ENCODE measurements at regions of chr1 and their contacts with region 1.

Region 1: DNA sequence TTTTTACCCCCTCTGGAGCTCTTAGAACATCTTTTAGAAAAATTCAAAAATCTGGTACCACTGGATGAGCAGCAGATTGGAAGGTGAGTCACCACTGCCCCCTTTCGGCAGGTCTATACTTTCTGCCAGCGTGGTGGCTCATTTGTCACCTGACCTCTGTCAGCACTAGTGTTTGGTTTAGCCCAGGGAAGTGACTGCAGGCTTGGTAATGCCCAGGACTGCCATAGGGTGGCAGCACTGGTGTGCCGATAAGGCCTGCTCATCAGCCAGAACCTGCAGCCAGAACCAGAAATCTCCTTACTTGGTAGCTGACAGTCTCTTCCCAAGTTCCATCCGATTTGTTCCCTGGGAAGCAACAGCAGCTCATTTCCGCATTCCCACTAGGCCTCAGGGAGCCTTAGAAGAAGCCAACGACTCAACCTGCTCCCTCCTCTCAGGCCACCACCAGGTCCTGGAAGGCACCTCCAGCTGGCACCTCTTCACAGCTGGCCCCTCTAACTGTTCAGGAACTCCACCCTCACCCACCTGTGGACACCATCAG is 6.8 kb downstream of the SMIM12 start:
- DNase-seq: peak; percentile 80 to 92 (median 88)
- ATAC-seq: peak; percentile 100
- H3K4me3 Mint-ChIP-seq: no peak overlapping the region
- H3K27ac Mint-ChIP-seq: peak overlapping the region in 9 of 10 donors; percentile 26 to 92 (median 68)
- H3K4me1 Mint-ChIP-seq: peaks cover 16 to 45% (median 35%) of the 10 kb centered on the region in 4 donors
- H3K27me3 Mint-ChIP-seq: no peaks in the 10 kb centered on the region

Region 2: GRCh38 chr1:34865981-34866761 is 13.4 kb after region 1 on chr1:
- POLR2A ChIA-PET with region 1: interaction called, 12 read pairs
- DNase-seq: peak; percentile 86 to 97 (median 92)
- ATAC-seq: peak; percentile 82 to 83
- H3K4me3 Mint-ChIP-seq: peak overlapping the region; percentile 80 to 93 (median 86)
- H3K27ac Mint-ChIP-seq: peak overlapping the region; percentile 80 to 95 (median 92)
- H3K4me1 Mint-ChIP-seq: peaks cover 26 to 62% (median 49%) of the 10 kb centered on the region in 4 donors
- H3K27me3 Mint-ChIP-seq: peaks cover 0 to 1% (median 0%) of the 10 kb centered on the region in 5 donors

Region 3: GRCh38 chr1:34885405-34886247 is 32.9 kb after region 1 on chr1:
- POLR2A ChIA-PET with region 1: no interaction called
- DNase-seq: peak in 2 of 10 donors; percentile 27 to 43
- ATAC-seq: peak; percentile 75 to 86
- H3K4me3 Mint-ChIP-seq: peak overlapping the region; percentile 55 to 85 (median 71)
- H3K27ac Mint-ChIP-seq: no peak overlapping the region
- H3K4me1 Mint-ChIP-seq: peaks cover 4 to 8% (median 5%) of the 10 kb centered on the region in 4 donors
- H3K27me3 Mint-ChIP-seq: peaks cover 23 to 61% (median 46%) of the 10 kb centered on the region in 5 donors